Pancreas (tissue), 10 donors: ENCODE measurements at regions of chr15 and their contacts with region 1.

Region 1: DNA sequence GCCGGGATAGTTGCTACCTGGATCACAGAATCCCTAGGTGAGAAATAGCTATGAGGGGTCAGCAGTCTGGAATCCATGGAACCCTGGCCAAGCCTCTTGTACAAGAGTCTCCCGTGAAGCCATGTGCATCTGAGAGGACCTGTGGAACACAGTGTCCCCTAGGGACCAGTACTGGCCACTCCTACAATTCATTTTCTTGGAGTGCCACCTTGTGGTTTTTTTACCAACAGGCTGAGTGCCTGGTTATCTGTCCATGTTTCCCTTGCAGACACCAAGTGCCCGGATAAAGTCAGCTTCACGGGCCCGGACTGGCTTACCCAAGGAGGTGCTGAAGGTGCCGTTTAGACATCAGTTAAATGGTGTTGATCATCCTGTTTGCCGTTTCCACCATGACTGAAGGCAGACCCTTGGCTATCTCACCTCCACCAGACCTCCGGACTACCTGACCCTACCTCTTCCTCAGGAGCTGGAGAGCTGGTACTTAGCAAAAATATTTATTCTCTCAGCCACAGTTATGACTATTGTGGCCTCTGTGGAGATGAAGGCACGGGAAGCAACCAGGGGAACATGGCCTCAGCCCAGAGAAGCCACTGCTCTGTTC is 93.9 kb downstream of the RBPMS2 start:
- DNase-seq: peak in 2 of 6 donors; percentile 50 to 65
- ATAC-seq: peak; percentile 86 to 92 (median 90)
- H3K4me3 ChIP-seq: no peak overlapping the region
- H3K27ac ChIP-seq: no peak overlapping the region
- H3K4me1 ChIP-seq: no peaks in the 10 kb centered on the region
- H3K27me3 ChIP-seq: no peaks in the 10 kb centered on the region
- CTCF ChIP-seq: peak; percentile 32 to 65 (median 56)

Region 2: DNA sequence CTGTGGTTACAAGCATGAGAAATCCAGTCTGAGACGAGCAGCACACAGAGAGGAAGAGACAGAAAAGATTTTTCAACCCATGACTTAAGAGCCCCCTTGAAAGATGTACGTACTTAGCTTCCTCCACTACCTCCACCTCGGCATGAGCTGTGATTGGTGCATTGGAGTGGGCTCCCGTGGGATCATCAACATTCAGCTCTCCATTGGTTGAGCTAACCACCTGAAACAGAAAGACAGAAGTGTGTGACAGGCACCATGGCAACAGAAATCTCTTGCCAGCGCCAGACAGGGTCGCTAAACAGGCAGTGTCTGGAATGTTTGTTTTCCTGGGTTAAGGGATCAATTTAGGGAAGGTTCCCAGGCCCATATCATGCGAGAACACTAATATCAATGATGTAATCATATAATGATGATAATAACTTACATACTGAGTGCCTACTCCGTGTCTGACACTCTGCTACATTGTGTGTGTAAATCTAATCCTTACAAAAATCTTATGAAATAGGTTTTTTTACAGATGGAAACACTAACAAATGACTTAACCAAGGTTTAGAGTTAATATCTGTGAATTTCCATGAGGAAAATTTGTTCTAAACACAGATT is 501.2 kb before region 1 on chr15:
- intact Hi-C with region 1: loop called in 1 of 3 experiments (anchors 10 kb)
- DNase-seq: no peak
- ATAC-seq: peak; percentile 48 to 88 (median 68)
- H3K4me3 ChIP-seq: no peak overlapping the region
- H3K27ac ChIP-seq: no peak overlapping the region
- H3K4me1 ChIP-seq: no peaks in the 10 kb centered on the region
- H3K27me3 ChIP-seq: no peaks in the 10 kb centered on the region
- CTCF ChIP-seq: no peak

Region 3: GRCh38 chr15:64430000-64430735 is 251.4 kb before region 1 on chr15:
- intact Hi-C with region 1: loop called in 2 of 3 experiments (anchors 10 kb)
- DNase-seq: no peak
- ATAC-seq: peak in 3 of 4 donors; percentile 30 to 52 (median 44)
- H3K4me3 ChIP-seq: no peak overlapping the region
- H3K27ac ChIP-seq: no peak overlapping the region
- H3K4me1 ChIP-seq: peaks cover 0 to 9% (median 0%) of the 10 kb centered on the region in 3 donors
- H3K27me3 ChIP-seq: no peaks in the 10 kb centered on the region
- CTCF ChIP-seq: no peak

Region 4: GRCh38 chr15:64460206-64460734 is 221.3 kb before region 1 on chr15 and contains the start of gene ZNF609:
- intact Hi-C with region 1: no loop called
- DNase-seq: peak; percentile 90 to 96 (median 94)
- ATAC-seq: peak; percentile 86 to 89 (median 88)
- H3K4me3 ChIP-seq: peak within 1 kb of the TSS; percentile 36 to 61 (median 56)
- H3K27ac ChIP-seq: peak within 1 kb of the TSS in 3 of 4 donors; percentile 48 to 81 (median 75)
- H3K4me1 ChIP-seq: peaks cover 28 to 50% (median 29%) of the 10 kb centered on the region in 3 donors
- H3K27me3 ChIP-seq: no peaks in the 10 kb centered on the region
- CTCF ChIP-seq: no peak
- total RNA-seq, gene ZNF609: 10.9 to 25.2 (median 13.9) TPM